ENCODE measurements at regions of chr16 and their contacts with region 1.

Region 1: DNA sequence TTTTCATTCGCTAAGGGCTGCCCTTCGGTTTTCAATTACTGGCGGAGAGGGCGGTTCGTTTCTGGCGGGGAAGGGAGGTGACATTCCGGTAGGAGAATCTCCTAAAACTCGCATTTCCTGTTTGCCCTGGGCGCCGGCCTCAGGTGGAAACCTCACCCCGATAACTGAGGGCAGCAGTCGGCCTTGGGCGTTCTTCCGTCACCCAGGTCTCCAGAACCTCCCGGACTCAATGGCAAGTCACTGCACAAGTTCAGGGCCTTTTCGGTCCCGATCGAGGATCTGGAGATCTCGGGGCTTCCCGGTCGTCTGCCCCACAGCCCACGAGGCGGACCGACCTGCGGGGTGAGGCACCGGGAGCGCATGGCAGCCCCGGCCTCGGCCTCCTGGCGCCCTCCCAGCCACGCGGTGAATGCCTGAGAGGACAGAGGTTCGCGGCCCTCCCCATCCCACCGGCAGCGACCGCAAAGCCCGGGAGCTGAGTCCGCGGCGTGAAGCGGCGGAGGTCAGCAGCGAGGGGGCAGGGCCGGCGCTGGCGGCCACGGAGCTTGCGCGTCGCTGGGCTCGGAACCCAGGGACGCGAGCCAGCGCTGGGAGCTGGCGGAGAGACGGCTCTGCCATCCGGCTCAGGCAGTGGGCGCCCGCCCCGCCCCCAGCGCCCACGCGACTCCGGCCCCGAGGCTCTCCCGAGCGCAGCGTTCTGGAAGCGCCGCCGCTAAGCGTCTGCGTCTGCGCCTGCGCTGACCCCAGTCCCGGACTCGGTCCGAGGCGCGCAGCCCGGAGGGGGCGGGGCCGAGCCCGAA is 58.4 kb downstream of the SRL start:
- DNase-seq: peak; percentile 51 to 95
- H3K4me3 ChIP-seq: peak overlapping the region; percentile 64 to 69
- H3K27ac ChIP-seq: peak overlapping the region; percentile 92 to 93
- H3K4me1 ChIP-seq: peaks cover 0 to 4% of the 10 kb centered on the region in 2 donors
- H3K27me3 ChIP-seq: no peaks in the 10 kb centered on the region
- CTCF ChIP-seq: peak in 1 of 3 experiments; percentile 28

Region 2: DNA sequence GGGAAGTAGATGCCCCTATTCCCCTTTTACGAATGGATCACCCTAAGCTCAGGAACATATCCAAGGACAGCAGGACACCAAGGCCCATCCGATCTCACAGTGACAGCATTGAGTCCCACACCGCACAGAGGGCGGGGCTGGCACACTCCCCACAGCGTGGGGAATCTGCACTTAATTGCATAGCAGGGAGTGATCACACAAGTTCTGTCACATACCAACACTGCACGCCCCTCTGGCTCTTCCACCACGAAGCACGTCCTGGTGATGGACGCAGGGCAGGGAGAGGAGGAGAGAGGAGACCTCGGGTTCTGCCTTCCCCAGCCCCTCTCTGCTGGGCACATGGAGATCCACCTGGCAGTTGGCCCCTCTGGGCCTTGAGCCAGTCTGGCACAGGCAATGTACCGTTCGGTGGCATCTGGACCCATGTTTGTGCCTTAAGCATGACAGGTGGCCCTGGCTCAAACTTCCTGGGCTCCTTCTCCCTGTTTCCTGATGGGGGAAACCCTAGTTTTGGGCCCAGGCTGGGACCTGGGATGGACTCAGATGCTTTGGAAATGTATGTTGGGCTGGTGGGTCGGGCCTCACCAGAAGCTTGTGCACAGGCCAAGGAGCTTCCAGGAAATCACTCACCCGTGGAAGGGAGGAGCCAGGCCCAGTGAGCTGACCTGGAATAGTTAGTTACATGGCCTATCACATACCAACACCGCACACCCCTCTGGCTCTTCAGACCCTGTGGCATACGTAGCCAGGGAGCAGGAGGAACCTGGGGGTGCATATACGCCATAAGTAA is 267.8 kb before region 1 on chr16:
- intact Hi-C with region 1: no loop called
- DNase-seq: no peak
- H3K4me3 ChIP-seq: no peak overlapping the region
- H3K27ac ChIP-seq: no peak overlapping the region
- H3K4me1 ChIP-seq: no peaks in the 10 kb centered on the region
- H3K27me3 ChIP-seq: no peaks in the 10 kb centered on the region
- CTCF ChIP-seq: no peak

Region 3: GRCh38 chr16:3999479-4000325 is 183.7 kb before region 1 on chr16:
- intact Hi-C with region 1: loop called (anchors 10 kb)
- DNase-seq: peak in 1 of 2 donors; percentile 77
- H3K4me3 ChIP-seq: no peak overlapping the region
- H3K27ac ChIP-seq: peak overlapping the region; percentile 21 to 27
- H3K4me1 ChIP-seq: peaks cover 4 to 18% of the 10 kb centered on the region in 2 donors
- H3K27me3 ChIP-seq: no peaks in the 10 kb centered on the region
- CTCF ChIP-seq: no peak

Region 4: GRCh38 chr16:4110680-4111079 is 72.8 kb before region 1 on chr16:
- intact Hi-C with region 1: no loop called
- DNase-seq: no peak
- H3K4me3 ChIP-seq: peak overlapping the region; percentile 89 to 95
- H3K27ac ChIP-seq: peak overlapping the region; percentile 6 to 39
- H3K4me1 ChIP-seq: peaks cover 0 to 25% of the 10 kb centered on the region in 2 donors
- H3K27me3 ChIP-seq: no peaks in the 10 kb centered on the region
- CTCF ChIP-seq: no peak

Region 5: DNA sequence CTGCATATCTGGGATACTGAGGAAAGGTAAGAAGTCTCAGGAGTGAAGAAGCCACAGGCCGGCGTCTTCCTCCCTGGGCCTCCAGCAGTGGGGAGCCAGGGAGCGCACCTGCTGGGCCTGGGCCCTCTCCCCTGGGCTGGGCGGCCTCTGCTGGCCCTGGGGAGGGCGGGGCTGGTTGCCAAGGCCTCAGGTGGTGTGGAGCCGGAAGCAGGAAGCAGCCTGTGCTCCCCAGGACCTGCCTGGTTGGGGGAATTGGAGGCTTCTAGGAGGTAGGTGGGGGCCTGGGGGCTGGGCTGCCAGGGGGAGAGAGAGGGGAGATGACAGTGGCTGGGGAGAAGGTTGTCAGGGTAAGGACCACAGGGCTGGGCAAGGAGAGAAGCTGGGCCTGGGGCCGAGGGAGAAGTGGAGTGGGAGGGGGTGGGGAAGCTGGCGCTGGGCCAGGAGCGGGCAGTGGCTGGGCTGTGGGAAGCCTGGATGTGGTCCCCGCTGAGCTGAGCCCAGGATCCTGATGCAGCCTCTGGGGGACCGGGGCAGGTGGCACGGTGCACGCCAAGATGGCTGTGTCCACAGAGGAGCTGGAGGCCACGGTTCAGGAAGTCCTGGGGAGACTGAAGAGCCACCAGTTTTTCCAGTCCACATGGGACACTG is 611.9 kb after region 1 on chr16 and contains the start of gene SMIM22:
- intact Hi-C with region 1: no loop called
- DNase-seq: no peak
- H3K4me3 ChIP-seq: no peak within 1 kb of the TSS
- H3K27ac ChIP-seq: no peak within 1 kb of the TSS
- H3K4me1 ChIP-seq: no peaks in the 10 kb centered on the region
- H3K27me3 ChIP-seq: no peaks in the 10 kb centered on the region
- CTCF ChIP-seq: no peak
- total RNA-seq, gene SMIM22: not detected

Measured in ascending aorta (tissue), 2 donors.